ENCODE measurements at regions of chrX and their contacts with region 1.

Region 1: DNA sequence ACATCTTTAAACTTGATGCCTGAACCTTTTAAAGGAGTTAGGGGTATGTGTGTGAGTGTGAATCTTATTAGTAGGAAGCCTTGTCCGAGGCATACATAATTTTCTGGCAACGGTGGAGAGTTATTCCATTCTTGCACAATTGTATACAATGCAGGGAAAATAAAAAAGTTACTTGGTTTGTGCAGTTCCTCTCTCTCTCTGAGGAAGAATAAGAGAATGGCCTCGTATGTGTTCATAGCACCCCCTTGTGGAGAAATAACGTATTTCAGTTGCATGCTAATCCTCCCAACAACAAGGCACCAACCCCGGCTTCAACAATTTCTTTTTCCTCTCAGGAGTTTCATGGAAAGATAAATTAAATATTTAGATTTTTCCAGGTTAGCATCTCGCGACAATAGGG is 33.7 kb upstream of the FGF13 start:
- DNase-seq: no peak
- H3K4me3 ChIP-seq: no peak overlapping the region
- H3K27ac ChIP-seq: no peak overlapping the region
- H3K4me1 ChIP-seq: no peaks in the 10 kb centered on the region
- H3K27me3 ChIP-seq: no peaks in the 10 kb centered on the region
- CTCF ChIP-seq: peak; percentile 48 to 78 (median 75)

Region 2: DNA sequence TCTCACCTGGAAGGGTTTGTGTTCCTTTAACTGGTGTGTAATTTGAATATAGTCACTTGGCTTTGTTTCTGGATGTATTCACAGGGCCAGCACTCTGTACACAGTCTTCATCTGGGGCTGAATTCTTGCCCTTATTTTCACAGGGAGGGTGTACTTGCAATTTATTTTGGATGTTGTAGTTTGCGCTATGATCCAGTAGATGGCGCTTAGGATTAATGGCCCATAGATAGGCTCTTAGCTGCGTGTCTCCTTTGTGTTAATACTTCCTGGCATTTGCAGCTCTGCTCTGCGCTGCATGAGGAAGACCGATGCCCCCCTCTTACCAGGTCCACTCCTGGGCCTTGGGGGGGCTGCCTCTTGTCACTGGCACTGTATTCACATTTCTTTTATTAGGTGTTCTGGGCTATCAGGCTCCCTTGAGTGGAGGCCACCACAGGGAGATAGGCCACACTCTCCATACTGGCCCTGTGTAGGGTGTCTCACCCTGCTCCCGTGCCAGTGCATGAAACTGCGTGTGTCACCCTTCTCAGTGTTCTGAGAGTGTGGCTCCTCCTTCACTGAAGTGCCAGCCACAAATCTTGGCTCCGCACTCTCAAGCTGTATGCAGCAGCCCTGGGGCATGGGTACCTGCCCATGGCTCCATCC is 617.0 kb before region 1 on chrX:
- intact Hi-C with region 1: loop called (anchors 2 kb)
- DNase-seq: no peak
- H3K4me3 ChIP-seq: no peak overlapping the region
- H3K27ac ChIP-seq: no peak overlapping the region
- H3K4me1 ChIP-seq: no peaks in the 10 kb centered on the region
- H3K27me3 ChIP-seq: no peaks in the 10 kb centered on the region
- CTCF ChIP-seq: peak in 2 of 3 experiments; percentile 47 to 58

Region 3: DNA sequence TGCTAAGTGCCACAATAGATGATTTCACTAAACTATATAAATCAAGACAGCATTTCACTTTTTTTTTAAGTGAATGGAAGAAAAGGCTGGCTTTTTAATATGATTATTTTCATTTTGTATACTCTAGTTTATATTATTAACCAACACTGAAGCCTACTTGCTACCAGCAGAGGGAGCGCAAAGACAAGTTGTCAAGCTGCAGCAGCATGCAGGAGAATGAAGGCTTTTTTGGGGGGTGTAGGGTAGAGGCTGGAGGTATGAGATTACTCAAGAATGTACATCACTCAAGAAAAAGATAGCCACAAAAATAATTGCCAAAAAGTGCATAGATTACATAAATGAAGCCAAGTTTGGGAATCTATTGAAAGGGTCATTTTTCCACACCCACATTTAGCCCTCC is 553.2 kb before region 1 on chrX:
- intact Hi-C with region 1: loop called (anchors 2 kb)
- DNase-seq: no peak
- H3K4me3 ChIP-seq: no peak overlapping the region
- H3K27ac ChIP-seq: no peak overlapping the region
- H3K4me1 ChIP-seq: no peaks in the 10 kb centered on the region
- H3K27me3 ChIP-seq: no peaks in the 10 kb centered on the region
- CTCF ChIP-seq: peak in 1 of 3 experiments; percentile 48

Region 4: GRCh38 chrX:138298259-138298658 is 446.9 kb before region 1 on chrX:
- intact Hi-C with region 1: loop called (anchors 2 kb)
- DNase-seq: no peak
- H3K4me3 ChIP-seq: no peak overlapping the region
- H3K27ac ChIP-seq: no peak overlapping the region
- H3K4me1 ChIP-seq: no peaks in the 10 kb centered on the region
- H3K27me3 ChIP-seq: no peaks in the 10 kb centered on the region
- CTCF ChIP-seq: peak in 1 of 3 experiments; percentile 11

Measured in ascending aorta (tissue), 2 donors.